ENCODE measurements at regions of chr6 and their contacts with region 1.

Region 1: DNA sequence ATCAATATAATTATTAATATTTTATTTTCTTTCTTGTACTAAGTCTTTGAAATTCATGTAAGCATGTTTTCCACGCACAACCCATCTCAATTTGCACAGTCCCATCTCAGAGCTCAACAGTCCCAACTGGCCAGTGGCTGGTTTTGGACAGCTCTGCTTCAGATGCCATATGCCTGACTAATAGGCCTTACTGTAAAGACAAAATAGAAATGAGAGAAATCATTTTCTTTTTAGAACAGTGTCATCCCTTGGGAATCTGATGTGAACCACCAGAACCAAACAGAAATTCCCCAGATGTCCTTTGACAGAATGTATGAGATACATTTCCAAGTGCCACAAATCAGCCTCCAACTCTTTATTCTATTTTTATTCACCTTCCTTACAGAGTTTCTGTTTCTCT is 338.9 kb downstream of the ESR1 start:
- DNase-seq: no peak
- ATAC-seq: no peak
- H3K4me3 ChIP-seq: no peak overlapping the region
- H3K4me3 Mint-ChIP-seq: no peak overlapping the region
- H3K27ac ChIP-seq: no peak overlapping the region
- H3K27ac Mint-ChIP-seq: peak overlapping the region; percentile 75
- H3K4me1 ChIP-seq: no peaks in the 10 kb centered on the region
- H3K4me1 Mint-ChIP-seq: peaks cover 3% of the 10 kb centered on the region
- H3K27me3 ChIP-seq: no peaks in the 10 kb centered on the region
- H3K27me3 Mint-ChIP-seq: no peaks in the 10 kb centered on the region
- CTCF ChIP-seq: no peak

Region 2: DNA sequence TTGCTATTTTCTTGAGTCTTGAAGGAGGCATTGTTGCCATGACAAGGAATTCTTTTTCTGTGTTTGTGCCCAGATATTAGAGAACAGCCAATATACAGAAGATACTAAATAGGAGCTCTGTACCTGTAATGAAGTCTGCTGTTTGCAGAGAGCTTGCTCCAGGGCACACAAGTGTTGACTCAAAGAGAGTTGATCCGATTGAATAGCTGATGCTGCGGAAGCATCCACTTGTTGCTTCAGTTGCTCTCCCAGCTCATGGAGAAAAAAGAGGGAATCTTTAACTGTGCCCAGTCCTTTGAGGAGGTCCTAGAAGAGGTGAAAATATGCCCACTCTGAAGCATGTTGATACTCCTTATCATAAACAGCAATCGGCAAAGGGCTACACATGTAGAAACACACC is 72.5 kb after region 1 on chr6:
- CTCF ChIA-PET with region 1: no interaction called
- POLR2A ChIA-PET with region 1: no interaction called
- intact Hi-C with region 1: loop called in 1 of 2 experiments (anchors 5 kb)
- DNase-seq: no peak
- ATAC-seq: no peak
- H3K4me3 ChIP-seq: no peak overlapping the region
- H3K4me3 Mint-ChIP-seq: no peak overlapping the region
- H3K27ac ChIP-seq: no peak overlapping the region
- H3K27ac Mint-ChIP-seq: no peak overlapping the region
- H3K4me1 ChIP-seq: no peaks in the 10 kb centered on the region
- H3K4me1 Mint-ChIP-seq: no peaks in the 10 kb centered on the region
- H3K27me3 ChIP-seq: no peaks in the 10 kb centered on the region
- H3K27me3 Mint-ChIP-seq: no peaks in the 10 kb centered on the region
- CTCF ChIP-seq: no peak